IMR-90 (cell line): ENCODE measurements at regions of chr16 and their contacts with region 1.

Region 1: GRCh38 chr16:58533751-58534470 is 18.6 kb downstream of the SETD6 start:
- DNase-seq: no peak
- ATAC-seq: no peak
- H3K4me3 ChIP-seq: no peak overlapping the region
- H3K27ac ChIP-seq: no peak overlapping the region
- H3K4me1 ChIP-seq: no peaks in the 10 kb centered on the region
- H3K27me3 ChIP-seq: no peaks in the 10 kb centered on the region
- CTCF ChIP-seq: no peak
- POLR2A ChIP-seq: no peak
- RAD21 ChIP-seq: no peak

Region 2: DNA sequence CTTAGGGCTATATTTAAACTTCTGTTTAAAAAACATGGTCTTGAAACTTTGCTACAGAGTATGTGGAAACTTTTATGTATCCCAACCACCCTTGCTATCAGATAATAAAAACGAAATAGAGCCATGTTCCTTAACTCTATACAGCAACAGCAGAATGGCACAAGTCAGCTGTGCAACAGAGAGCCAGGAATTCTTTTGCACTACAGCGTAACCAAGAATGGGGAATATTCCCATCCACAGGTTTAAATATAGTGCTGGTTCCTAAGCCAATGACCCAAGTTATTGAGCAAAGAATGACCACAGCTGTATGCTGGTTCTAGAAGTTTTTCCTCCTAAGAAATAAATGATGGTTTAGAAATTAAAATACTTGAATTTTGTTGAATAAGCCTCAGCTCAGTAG is 14.5 kb after region 1 on chr16:
- CTCF ChIA-PET with region 1: interaction called, 4 read pairs
- POLR2A ChIA-PET with region 1: no interaction called
- dilution Hi-C with region 1: no loop called
- in situ Hi-C with region 1: no loop called
- intact Hi-C with region 1: loop called (anchors 2 kb)
- DNase-seq: no peak
- ATAC-seq: no peak; the same call in 1 of the 2 replicates
- H3K4me3 ChIP-seq: no peak overlapping the region
- H3K27ac ChIP-seq: no peak overlapping the region
- H3K4me1 ChIP-seq: no peaks in the 10 kb centered on the region
- H3K27me3 ChIP-seq: no peaks in the 10 kb centered on the region
- CTCF ChIP-seq: no peak
- POLR2A ChIP-seq: no peak
- RAD21 ChIP-seq: no peak

Region 3: GRCh38 chr16:58578642-58579041 is 44.7 kb after region 1 on chr16:
- CTCF ChIA-PET with region 1: no interaction called
- POLR2A ChIA-PET with region 1: no interaction called
- dilution Hi-C with region 1: no loop called
- in situ Hi-C with region 1: loop called (anchors 5 kb)
- intact Hi-C with region 1: loop called (anchors 2 kb)
- DNase-seq: no peak
- ATAC-seq: no peak
- H3K4me3 ChIP-seq: no peak overlapping the region
- H3K27ac ChIP-seq: no peak overlapping the region
- H3K4me1 ChIP-seq: no peaks in the 10 kb centered on the region
- H3K27me3 ChIP-seq: no peaks in the 10 kb centered on the region
- CTCF ChIP-seq: no peak
- POLR2A ChIP-seq: no peak
- RAD21 ChIP-seq: no peak

Region 4: DNA sequence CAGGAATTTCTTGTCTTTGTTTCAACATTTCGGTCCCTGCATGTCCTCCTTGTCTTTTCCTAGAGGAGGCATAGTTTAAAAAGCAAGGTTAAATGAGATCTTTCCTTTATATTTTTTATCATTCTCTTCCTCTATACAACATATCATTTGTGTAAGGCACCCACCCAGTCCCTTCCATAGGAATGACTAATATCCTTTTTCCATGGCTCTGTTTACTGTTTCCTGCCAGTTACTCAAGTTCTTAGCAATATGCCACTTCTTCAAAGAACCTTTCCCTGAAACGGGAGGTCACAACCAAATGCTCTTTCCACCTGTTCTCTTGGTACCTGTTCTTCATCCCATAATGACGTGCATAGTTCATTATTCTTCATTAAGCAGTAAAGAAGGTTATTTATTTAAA is 1437.4 kb after region 1 on chr16:
- CTCF ChIA-PET with region 1: no interaction called
- POLR2A ChIA-PET with region 1: no interaction called
- dilution Hi-C with region 1: no loop called
- in situ Hi-C with region 1: no loop called
- intact Hi-C with region 1: no loop called
- DNase-seq: no peak
- ATAC-seq: no peak
- H3K4me3 ChIP-seq: no peak overlapping the region
- H3K27ac ChIP-seq: no peak overlapping the region
- H3K4me1 ChIP-seq: no peaks in the 10 kb centered on the region
- H3K27me3 ChIP-seq: no peaks in the 10 kb centered on the region
- CTCF ChIP-seq: no peak
- POLR2A ChIP-seq: no peak
- RAD21 ChIP-seq: no peak